ENCODE measurements at regions of chr12 and their contacts with region 1.

Region 1: DNA sequence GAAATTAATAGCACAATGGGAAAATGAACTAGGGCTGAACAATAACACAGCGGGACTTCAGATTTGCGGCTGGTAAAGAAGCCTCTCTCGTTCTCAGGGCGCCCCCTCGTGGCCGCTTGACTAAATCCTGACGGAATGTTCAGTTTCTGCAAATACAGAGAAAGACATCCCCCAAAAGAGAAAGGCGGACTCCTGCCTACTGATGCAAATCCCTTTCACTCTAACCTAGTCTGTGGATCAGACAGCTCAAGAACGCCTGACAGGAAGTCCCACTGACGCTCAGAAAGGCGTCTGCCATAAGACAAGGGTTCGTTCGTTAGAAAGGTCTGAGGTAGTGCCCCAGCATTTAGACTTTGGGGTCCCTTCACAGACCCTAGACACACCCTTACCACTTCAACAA is 2.5 kb downstream of the NUAK1 start:
- DNase-seq: peak; percentile 56
- ATAC-seq: no peak
- H3K4me3 Mint-ChIP-seq: no peak overlapping the region
- H3K27ac Mint-ChIP-seq: no peak overlapping the region
- H3K4me1 Mint-ChIP-seq: peaks cover 9% of the 10 kb centered on the region
- H3K27me3 Mint-ChIP-seq: peaks cover 60% of the 10 kb centered on the region
- CTCF ChIP-seq: peak; percentile 24

Region 2: DNA sequence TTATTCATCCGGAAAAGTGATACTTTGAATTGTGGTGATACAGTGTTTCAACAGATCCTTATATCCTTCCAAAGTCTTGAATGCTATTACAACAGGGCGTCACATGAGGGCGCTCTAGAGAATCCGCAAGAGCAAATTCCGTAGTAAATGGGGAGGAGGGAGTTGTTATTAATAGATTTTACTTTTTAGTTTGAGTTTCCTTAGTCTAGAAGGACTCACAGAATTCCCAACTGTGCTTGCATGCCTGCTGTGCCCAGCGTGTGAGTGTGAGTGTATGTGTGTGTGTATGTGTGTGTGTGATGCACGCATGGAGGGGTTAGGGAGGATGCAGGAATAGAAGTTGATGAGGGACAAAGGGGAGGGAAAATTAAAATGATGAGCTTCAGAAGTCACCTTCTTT is 430.5 kb before region 1 on chr12:
- CTCF ChIA-PET with region 1: no interaction called
- POLR2A ChIA-PET with region 1: no interaction called
- intact Hi-C with region 1: loop called (anchors 5 kb)
- DNase-seq: no peak
- ATAC-seq: no peak
- H3K4me3 Mint-ChIP-seq: no peak overlapping the region
- H3K27ac Mint-ChIP-seq: no peak overlapping the region
- H3K4me1 Mint-ChIP-seq: no peaks in the 10 kb centered on the region
- H3K27me3 Mint-ChIP-seq: peaks cover 7% of the 10 kb centered on the region
- CTCF ChIP-seq: no peak

Region 3: GRCh38 chr12:106149096-106149784 is 13.0 kb after region 1 on chr12:
- CTCF ChIA-PET with region 1: interaction called, 15 read pairs
- POLR2A ChIA-PET with region 1: no interaction called
- intact Hi-C with region 1: no loop called
- DNase-seq: no peak
- ATAC-seq: no peak
- H3K4me3 Mint-ChIP-seq: no peak overlapping the region
- H3K27ac Mint-ChIP-seq: no peak overlapping the region
- H3K4me1 Mint-ChIP-seq: no peaks in the 10 kb centered on the region
- H3K27me3 Mint-ChIP-seq: peaks cover 31% of the 10 kb centered on the region
- CTCF ChIP-seq: no peak